ENCODE measurements at regions of chr1 and their contacts with region 1.

Region 1: DNA sequence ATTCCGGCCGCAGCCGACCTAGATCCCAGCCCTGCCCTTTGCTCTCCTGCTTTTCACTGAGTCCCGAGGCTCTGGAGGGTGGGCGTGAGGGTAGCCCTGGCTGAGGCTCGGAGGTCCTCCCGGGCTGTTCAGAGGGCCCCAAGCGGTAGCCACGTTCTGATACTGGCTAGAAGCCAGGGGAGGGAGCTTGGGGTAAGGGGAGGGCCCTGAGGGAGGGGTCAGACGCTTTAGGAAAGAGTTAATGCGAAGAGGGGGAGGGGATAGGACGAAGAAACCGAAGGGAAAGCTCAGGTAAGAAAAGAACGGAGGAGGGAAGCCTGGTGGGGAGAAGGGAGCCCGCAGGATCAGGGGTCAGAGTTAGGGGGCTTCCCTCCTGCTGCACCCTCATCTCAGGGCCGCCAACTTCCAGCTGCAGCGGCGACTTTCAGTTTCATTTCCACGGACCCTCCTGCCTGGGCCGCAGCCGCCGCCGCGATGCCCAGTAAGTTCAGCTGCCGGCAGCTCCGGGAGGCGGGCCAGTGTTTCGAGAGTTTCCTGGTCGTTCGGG is at the start of gene MOV10:
- DNase-seq: peak; percentile 9 to 58
- ATAC-seq: peak; percentile 64 to 72
- H3K4me3 ChIP-seq: peak within 1 kb of the TSS; percentile 62 to 89 (median 78)
- H3K27ac ChIP-seq: peak within 1 kb of the TSS; percentile 75 to 84 (median 80)
- H3K4me1 ChIP-seq: peaks cover 14 to 18% of the 10 kb centered on the region in 2 donors
- H3K27me3 ChIP-seq: no peaks in the 10 kb centered on the region
- CTCF ChIP-seq: no peak
- POLR2A ChIP-seq: no peak
- total RNA-seq, gene MOV10: 2.8 to 7.2 (median 4.8) TPM

Region 2: DNA sequence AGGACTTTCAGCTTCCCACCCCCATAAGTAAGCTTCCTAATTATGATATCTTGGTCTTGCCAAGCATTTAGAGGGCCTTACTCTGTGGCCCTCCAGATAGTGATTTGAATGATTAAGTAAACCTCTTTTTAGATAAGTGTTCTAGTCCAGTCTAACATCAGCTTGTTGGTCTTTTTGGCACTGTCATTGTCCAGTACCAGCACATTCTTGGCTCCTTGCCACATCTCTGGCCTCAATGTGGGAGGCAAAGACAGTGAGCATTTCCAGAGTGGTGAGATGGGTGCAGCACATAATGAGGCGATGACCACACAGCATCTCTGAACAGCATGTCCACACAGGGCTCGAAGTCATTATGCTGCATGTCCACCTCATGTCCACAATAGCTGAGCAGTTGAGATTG is 48.8 kb before region 1 on chr1:
- in situ Hi-C with region 1: no loop called
- intact Hi-C with region 1: loop called (anchors 5 kb)
- DNase-seq: no peak
- ATAC-seq: no peak
- H3K4me3 ChIP-seq: no peak overlapping the region
- H3K27ac ChIP-seq: peak overlapping the region in 3 of 4 donors; percentile 3 to 97 (median 43)
- H3K4me1 ChIP-seq: peaks cover 41 to 47% of the 10 kb centered on the region in 2 donors
- H3K27me3 ChIP-seq: no peaks in the 10 kb centered on the region
- CTCF ChIP-seq: no peak
- POLR2A ChIP-seq: no peak

Region 3: GRCh38 chr1:112700290-112701226 is 26.0 kb after region 1 on chr1:
- in situ Hi-C with region 1: no loop called
- intact Hi-C with region 1: loop called (anchors 2 kb)
- DNase-seq: peak; percentile 78 to 92
- ATAC-seq: peak; percentile 66 to 74
- H3K4me3 ChIP-seq: peak overlapping the region in 2 of 4 donors; percentile 1 to 6
- H3K27ac ChIP-seq: peak overlapping the region; percentile 85 to 94 (median 90)
- H3K4me1 ChIP-seq: peaks cover 42 to 43% of the 10 kb centered on the region in 2 donors
- H3K27me3 ChIP-seq: no peaks in the 10 kb centered on the region
- CTCF ChIP-seq: peak in 1 of 5 experiments; percentile 29
- POLR2A ChIP-seq: peak; percentile 29 to 55

Region 4: GRCh38 chr1:112735752-112736151 is 61.2 kb after region 1 on chr1:
- in situ Hi-C with region 1: no loop called
- intact Hi-C with region 1: no loop called
- DNase-seq: no peak
- ATAC-seq: no peak
- H3K4me3 ChIP-seq: no peak overlapping the region
- H3K27ac ChIP-seq: no peak overlapping the region
- H3K4me1 ChIP-seq: no peaks in the 10 kb centered on the region
- H3K27me3 ChIP-seq: peaks cover 0 to 7% (median 3%) of the 10 kb centered on the region in 3 donors
- CTCF ChIP-seq: no peak
- POLR2A ChIP-seq: no peak

Measured in gastrocnemius medialis (tissue), 4 donors.